ENCODE measurements at regions of chr12 and their contacts with region 1.

Region 1: DNA sequence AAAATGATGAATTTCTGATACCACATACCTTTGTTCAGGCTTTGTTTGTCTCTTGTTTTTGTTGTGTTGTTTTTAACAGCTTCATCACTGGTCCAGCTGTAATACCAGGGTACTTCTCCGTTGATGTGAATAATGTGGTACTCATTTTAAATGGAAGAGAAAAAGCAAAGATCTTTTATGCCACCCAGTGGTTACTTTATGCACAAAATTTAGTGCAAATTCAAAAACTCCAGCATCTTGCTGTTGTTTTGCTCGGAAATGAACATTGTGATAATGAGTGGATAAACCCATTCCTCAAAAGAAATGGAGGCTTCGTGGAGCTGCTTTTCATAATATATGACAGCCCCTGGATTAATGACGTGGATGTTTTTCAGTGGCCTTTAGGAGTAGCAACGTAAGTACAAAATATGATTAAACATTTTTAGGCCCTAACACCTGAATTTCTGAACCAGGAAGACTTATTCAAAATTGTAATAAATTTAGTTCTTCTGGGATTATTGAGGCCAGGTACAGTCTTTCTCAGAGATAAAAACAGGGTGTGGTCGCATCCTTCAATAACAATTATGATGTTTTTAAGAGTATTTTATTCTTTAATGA is 22.4 kb downstream of the RXYLT1 start:
- DNase-seq: peak; percentile 34
- H3K4me3 ChIP-seq: no peak overlapping the region
- H3K27ac ChIP-seq: no peak overlapping the region
- H3K4me1 ChIP-seq: no peaks in the 10 kb centered on the region
- CTCF ChIP-seq: peak; percentile 81

Region 2: GRCh38 chr12:63420206-63420644 is 381.9 kb before region 1 on chr12:
- CTCF ChIA-PET with region 1: no interaction called
- POLR2A ChIA-PET with region 1: no interaction called
- intact Hi-C with region 1: loop called (anchors 2 kb)
- DNase-seq: peak; percentile 67
- H3K4me3 ChIP-seq: no peak overlapping the region
- H3K27ac ChIP-seq: no peak overlapping the region
- H3K4me1 ChIP-seq: no peaks in the 10 kb centered on the region
- CTCF ChIP-seq: peak; percentile 86

Region 3: GRCh38 chr12:63668028-63668799 is 133.9 kb before region 1 on chr12 and contains the start of gene DPY19L2:
- CTCF ChIA-PET with region 1: no interaction called
- POLR2A ChIA-PET with region 1: no interaction called
- intact Hi-C with region 1: loop called (anchors 10 kb)
- DNase-seq: no peak
- H3K4me3 ChIP-seq: no peak within 1 kb of the TSS
- H3K27ac ChIP-seq: no peak within 1 kb of the TSS
- H3K4me1 ChIP-seq: no peaks in the 10 kb centered on the region
- CTCF ChIP-seq: no peak
- total RNA-seq, gene DPY19L2: not detected in 2 replicates

Measured in OCI-LY7 (cell line).